ENCODE measurements at regions of chr18 and their contacts with region 1.

Region 1: GRCh38 chr18:59908790-59909189 is 9.0 kb downstream of the PMAIP1 start:
- H3K4me3 ChIP-seq: no peak overlapping the region
- H3K27ac ChIP-seq: peak overlapping the region; percentile 27
- H3K4me1 ChIP-seq: peaks cover 43% of the 10 kb centered on the region
- CTCF ChIP-seq: no peak

Region 2: DNA sequence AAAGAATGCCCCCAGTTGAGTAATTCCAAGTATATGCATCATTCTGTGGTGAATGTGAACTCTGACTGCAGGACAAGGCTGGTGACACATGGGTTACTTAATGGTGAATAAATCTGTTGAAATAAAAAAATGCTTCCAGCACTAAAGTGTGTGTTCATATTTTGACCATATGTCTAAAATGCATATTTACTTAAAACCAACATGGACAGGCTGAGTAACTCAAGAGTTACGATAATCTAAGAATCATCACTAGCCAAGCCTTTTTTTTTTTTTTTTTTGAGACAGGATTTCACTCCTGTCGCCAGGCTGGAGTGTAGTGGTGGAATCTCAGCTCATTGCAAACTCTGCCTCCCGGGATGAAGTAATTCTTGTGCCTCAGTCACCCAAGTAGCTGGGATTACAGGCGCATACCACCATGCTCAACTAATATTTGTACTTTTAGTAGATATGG is 164.5 kb before region 1 on chr18:
- CTCF ChIA-PET with region 1: no interaction called
- POLR2A ChIA-PET with region 1: no interaction called
- H3K4me3 ChIP-seq: no peak overlapping the region
- H3K27ac ChIP-seq: no peak overlapping the region
- H3K4me1 ChIP-seq: no peaks in the 10 kb centered on the region
- CTCF ChIP-seq: no peak

Region 3: GRCh38 chr18:59837586-59837985 is 71.2 kb before region 1 on chr18:
- CTCF ChIA-PET with region 1: interaction called, 15 read pairs
- POLR2A ChIA-PET with region 1: interaction called, 22 read pairs
- H3K4me3 ChIP-seq: no peak overlapping the region
- H3K27ac ChIP-seq: no peak overlapping the region
- H3K4me1 ChIP-seq: peaks cover 7% of the 10 kb centered on the region
- CTCF ChIP-seq: peak; percentile 92

Region 4: GRCh38 chr18:60471652-60472051 is 562.9 kb after region 1 on chr18:
- CTCF ChIA-PET with region 1: no interaction called
- POLR2A ChIA-PET with region 1: no interaction called
- H3K4me3 ChIP-seq: no peak overlapping the region
- H3K27ac ChIP-seq: no peak overlapping the region
- H3K4me1 ChIP-seq: no peaks in the 10 kb centered on the region
- CTCF ChIP-seq: no peak